HEK293T (cell line): ENCODE measurements at regions of chr2 and their contacts with region 1.

Region 1: GRCh38 chr2:172461591-172462372 is 34.4 kb downstream of the ITGA6 start:
- DNase-seq: peak; percentile 69

Region 2: DNA sequence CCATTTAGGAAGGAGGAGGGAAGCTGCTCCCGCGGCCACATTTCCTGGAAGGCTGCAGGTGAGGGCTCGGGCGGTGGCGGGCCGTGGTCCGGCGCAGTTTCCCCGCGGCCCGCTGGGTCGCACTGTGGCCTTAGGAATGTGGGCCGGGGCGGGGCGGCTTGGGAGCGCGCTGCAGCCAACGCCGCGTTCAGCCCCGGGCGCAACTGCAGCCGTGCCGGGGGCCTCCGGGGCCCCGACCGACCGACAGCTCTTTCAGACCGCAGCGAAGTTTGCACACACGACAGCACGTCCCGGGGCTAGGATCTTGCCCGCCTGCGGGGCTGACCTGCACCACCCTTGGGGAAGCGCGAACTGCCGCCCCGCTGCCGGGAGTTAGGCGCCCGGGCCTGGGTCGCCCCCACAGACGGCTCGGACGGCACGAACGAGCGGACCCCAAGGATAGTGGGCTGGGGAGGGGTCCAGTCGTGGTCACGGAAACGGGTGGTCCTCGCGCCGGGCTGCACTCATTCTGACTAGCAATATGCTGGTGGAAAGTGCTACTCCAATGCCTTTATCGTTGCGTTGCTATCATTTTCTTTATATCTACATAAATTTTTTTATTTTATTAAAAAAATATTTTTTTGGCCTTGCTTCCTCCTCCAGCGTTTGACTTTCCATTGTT is 289.1 kb before region 1 on chr2:
- CTCF ChIA-PET with region 1: interaction called, 29 read pairs
- POLR2A ChIA-PET with region 1: interaction called, 5 read pairs
- DNase-seq: peak; percentile 87

Region 3: DNA sequence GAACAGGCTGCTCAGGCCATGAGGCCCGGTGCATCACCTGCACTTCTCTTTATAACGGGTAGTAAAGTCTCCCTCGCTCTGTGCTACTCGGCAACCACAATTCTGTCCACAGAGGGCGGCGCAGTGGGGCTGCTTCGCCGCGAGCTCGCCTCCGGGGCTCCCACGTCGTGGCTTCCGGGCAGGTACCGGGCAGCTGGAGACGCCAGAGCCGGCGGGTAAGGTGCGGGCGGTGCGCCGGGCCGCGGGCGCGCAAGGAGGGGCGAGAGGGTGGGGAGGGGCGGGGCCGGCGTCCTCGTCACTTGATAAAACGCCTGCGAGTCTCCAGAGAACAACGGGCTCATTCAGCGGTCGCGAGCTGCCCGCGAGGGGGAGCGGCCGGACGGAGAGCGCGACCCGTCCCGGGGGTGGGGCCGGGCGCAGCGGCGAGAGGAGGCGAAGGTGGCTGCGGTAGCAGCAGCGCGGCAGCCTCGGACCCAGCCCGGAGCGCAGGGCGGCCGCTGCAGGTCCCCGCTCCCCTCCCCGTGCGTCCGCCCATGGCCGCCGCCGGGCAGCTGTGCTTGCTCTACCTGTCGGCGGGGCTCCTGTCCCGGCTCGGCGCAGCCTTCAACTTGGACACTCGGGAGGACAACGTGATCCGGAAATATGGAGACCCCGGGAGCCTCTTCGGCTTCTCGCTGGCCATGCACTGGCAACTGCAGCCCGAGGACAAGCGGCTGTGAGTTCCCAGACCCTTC is 34.4 kb before region 1 on chr2 and contains the start of gene ITGA6:
- CTCF ChIA-PET with region 1: interaction called, 13 read pairs
- POLR2A ChIA-PET with region 1: interaction called, 8 read pairs
- DNase-seq: peak; percentile 76

Region 4: DNA sequence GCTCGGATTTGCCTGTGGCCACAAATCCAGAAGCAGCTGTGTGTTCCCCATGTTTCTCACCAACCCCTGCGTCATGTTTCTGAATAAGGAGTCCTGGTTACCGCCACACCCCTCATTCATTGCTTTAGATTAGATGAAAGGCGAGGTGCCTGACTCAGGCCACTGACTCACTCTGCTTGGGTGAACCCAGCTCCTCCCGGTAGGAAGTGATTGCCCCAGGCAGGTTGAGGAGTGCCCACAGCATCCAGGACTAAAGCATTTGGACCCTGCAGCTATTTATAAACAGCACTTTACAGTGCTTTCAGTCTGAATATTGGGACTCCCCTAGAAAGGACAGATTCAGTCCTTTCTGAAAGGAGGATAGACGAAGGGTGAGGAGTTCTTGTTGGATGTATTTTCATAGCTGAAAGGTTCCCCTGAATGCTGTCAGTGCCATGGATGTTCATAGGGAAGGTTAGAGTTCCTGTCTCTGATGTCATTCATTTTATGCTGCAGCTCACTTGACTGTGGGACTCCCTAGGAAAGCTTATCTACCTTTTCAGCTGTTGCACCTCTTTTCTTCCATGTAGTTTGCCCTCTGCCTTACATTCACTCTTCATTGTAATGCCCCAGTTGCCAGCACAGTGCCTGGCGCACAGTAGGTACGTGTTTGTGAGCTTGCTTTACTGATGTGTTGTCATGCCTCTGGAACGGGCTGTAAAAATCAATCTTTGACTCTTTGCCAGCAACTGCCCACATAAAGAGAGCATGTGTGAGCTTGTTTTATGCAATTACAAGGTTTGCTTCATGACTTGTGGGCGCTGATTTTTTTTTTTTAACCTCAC is 19.5 kb before region 1 on chr2:
- CTCF ChIA-PET with region 1: interaction called, 13 read pairs
- POLR2A ChIA-PET with region 1: no interaction called
- DNase-seq: peak; percentile 12